Stomach (tissue), 19 donors: ENCODE measurements at regions of chr19 and their contacts with region 1.

Region 1: GRCh38 chr19:35140962-35141637 is 2.0 kb upstream of the FXYD7 start:
- DNase-seq: peak; percentile 94 to 97
- H3K4me3 ChIP-seq: peak overlapping the region; percentile 30 to 38 (median 34)
- H3K27ac ChIP-seq: peak overlapping the region; percentile 6 to 86 (median 84)
- H3K4me1 ChIP-seq: peaks cover 31 to 77% (median 65%) of the 10 kb centered on the region in 4 donors
- H3K27me3 ChIP-seq: peaks cover 0 to 56% (median 16%) of the 10 kb centered on the region in 3 donors
- CTCF ChIP-seq: peak in 5 of 7 experiments; percentile 6 to 60 (median 26)
- EP300 ChIP-seq: no peak
- POLR2A ChIP-seq: no peak

Region 2: DNA sequence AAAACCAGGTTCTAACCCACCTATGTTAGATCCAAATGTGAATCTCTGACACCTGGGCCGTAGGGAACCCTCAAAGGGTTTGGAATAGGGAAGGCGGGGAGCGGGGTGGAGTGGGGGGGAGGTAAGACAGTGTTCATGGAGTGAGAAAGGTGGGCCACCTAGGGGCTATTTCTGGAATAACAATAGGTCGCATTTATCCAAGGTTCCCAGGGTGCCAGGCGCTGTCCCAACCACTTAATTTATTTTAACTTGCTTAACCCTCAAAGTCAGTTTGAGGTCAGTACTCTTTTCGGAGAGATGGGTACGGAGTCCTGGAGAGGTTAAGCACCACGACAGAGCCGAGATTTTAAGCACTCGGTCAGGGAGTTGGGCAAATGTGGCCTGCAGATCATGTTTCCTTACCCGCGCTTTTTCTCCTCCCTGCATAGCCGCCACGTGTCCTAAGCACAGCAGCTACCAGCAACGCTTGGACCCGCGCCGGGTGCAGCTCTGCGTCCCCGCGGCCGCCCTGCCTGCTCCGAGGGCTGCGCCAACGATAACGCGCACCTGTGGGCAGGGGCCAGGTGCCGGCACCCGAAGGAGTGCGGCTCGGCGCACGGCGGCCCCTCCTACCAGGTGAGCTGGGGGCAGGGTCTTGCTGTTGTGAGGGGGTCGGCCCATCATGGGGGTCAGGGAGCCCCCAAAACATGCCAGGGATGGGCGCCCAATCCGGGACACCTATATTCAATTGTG is 50.4 kb before region 1 on chr19:
- intact Hi-C with region 1: no loop called
- DNase-seq: peak; percentile 69 to 88
- H3K4me3 ChIP-seq: peak overlapping the region; percentile 16 to 28 (median 19)
- H3K27ac ChIP-seq: peak overlapping the region in 2 of 5 donors; percentile 42 to 43
- H3K4me1 ChIP-seq: peaks cover 7 to 15% (median 11%) of the 10 kb centered on the region in 4 donors
- H3K27me3 ChIP-seq: peaks cover 0 to 18% (median 4%) of the 10 kb centered on the region in 3 donors
- CTCF ChIP-seq: peak in 5 of 7 experiments; percentile 46 to 76 (median 59)
- EP300 ChIP-seq: no peak
- POLR2A ChIP-seq: no peak

Region 3: GRCh38 chr19:35269421-35270117 is 128.5 kb after region 1 on chr19:
- intact Hi-C with region 1: loop called (anchors 10 kb)
- DNase-seq: peak; percentile 90 to 96
- H3K4me3 ChIP-seq: peak overlapping the region; percentile 66 to 84 (median 75)
- H3K27ac ChIP-seq: peak overlapping the region; percentile 90 to 96 (median 93)
- H3K4me1 ChIP-seq: peaks cover 17 to 67% (median 52%) of the 10 kb centered on the region in 4 donors
- H3K27me3 ChIP-seq: no peaks in the 10 kb centered on the region
- CTCF ChIP-seq: peak in 5 of 7 experiments; percentile 23 to 90 (median 68)
- EP300 ChIP-seq: no peak
- POLR2A ChIP-seq: no peak